Naive thymus-derived CD4-positive, alpha-beta T cell (primary cell): ENCODE measurements at regions of chr1 and their contacts with region 1.

Region 1: DNA sequence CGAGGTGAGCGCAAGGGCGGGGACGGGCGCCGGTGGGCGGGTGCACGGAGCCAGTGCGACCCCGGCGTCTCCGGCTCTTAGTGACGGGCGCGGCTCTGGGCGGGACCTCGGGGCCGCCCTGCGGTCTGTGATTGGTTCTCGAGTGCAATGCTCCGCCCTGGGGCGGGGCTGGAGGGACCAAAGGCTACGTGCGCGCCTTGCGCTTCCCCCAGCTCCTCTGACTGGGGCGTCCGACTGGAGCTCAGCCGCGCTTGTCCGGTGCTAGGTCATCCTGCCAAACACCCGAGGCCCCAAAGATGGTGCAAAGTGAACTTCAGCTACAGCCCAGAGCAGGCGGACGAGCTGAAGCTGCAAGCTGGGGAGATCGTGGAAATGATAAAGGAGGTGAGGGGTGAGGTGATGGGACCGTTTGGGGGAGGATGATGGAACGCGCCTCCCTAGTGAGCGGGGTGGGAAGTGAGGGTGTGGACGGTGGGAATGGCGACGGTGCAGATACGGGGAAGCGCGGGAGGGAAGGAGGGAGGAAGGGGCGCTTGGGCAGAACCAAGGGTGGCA is 811 bp downstream of the SH3D21 start:
- DNase-seq: peak; percentile 90 to 96 (median 93)
- ATAC-seq: peak; percentile 99
- H3K4me3 ChIP-seq: peak overlapping the region; percentile 87
- H3K4me3 Mint-ChIP-seq: peak overlapping the region; percentile 87 to 98 (median 96)
- H3K27ac ChIP-seq: peak overlapping the region; percentile 81
- H3K27ac Mint-ChIP-seq: peak overlapping the region; percentile 70 to 97 (median 87)
- H3K4me1 ChIP-seq: peaks cover 0 to 6% of the 10 kb centered on the region in 2 donors
- H3K4me1 Mint-ChIP-seq: peaks cover 6 to 39% (median 13%) of the 10 kb centered on the region in 7 donors
- H3K27me3 ChIP-seq: no peaks in the 10 kb centered on the region
- H3K27me3 Mint-ChIP-seq: no peaks in the 10 kb centered on the region

Region 2: DNA sequence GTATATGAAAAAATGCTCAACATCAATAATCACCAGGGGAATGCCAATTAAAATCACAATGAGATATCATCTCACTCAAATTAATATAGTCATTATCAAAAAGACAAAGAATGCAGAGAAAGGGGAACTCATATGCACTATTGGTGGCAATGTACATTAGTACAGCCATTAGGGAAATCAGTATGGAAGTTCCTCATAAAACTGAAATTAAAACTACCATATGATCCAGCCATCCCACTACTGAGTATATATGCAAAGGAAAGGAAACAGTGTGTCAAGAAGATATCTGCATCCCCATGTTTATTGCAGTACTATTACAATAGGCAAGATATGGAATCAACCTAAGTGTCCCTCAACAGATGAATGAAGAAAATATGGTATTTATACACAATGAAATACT is 255.2 kb before region 1 on chr1:
- CTCF ChIA-PET with region 1: no interaction called
- POLR2A ChIA-PET with region 1: no interaction called
- intact Hi-C with region 1: no loop called
- DNase-seq: no peak
- ATAC-seq: no peak
- H3K4me3 ChIP-seq: no peak overlapping the region
- H3K4me3 Mint-ChIP-seq: no peak overlapping the region
- H3K27ac ChIP-seq: no peak overlapping the region
- H3K27ac Mint-ChIP-seq: peak overlapping the region in 1 of 9 donors; percentile 0
- H3K4me1 ChIP-seq: no peaks in the 10 kb centered on the region
- H3K4me1 Mint-ChIP-seq: peaks cover 0 to 5% (median 0%) of the 10 kb centered on the region in 7 donors
- H3K27me3 ChIP-seq: no peaks in the 10 kb centered on the region
- H3K27me3 Mint-ChIP-seq: no peaks in the 10 kb centered on the region

Region 3: GRCh38 chr1:36323597-36324352 is 16.8 kb after region 1 on chr1 and contains the start of gene EVA1B:
- CTCF ChIA-PET with region 1: no interaction called
- POLR2A ChIA-PET with region 1: interaction called, 6 read pairs
- intact Hi-C with region 1: loop called (anchors 1 to 2 kb)
- DNase-seq: peak in 4 of 9 donors; percentile 19 to 72 (median 22)
- ATAC-seq: peak; percentile 37
- H3K4me3 ChIP-seq: peak within 1 kb of the TSS; percentile 74
- H3K4me3 Mint-ChIP-seq: peak within 1 kb of the TSS; percentile 70 to 87 (median 80)
- H3K27ac ChIP-seq: peak within 1 kb of the TSS; percentile 46
- H3K27ac Mint-ChIP-seq: peak within 1 kb of the TSS in 7 of 9 donors; percentile 14 to 77 (median 59)
- H3K4me1 ChIP-seq: peaks cover 10 to 11% of the 10 kb centered on the region in 2 donors
- H3K4me1 Mint-ChIP-seq: peaks cover 14 to 35% (median 23%) of the 10 kb centered on the region in 7 donors
- H3K27me3 ChIP-seq: no peaks in the 10 kb centered on the region
- H3K27me3 Mint-ChIP-seq: peaks cover 0 to 5% (median 0%) of the 10 kb centered on the region in 5 donors
- total RNA-seq, gene EVA1B: 1.5 to 12.5 (median 2.2) TPM